Activated CD4-positive, alpha-beta memory T cell treated with anti-CD3 and anti-CD28 coated beads, Interleukin-2, amount 10 ng/mL, durations not matched to agents 7 days and 5 days (primary cell): ENCODE measurements at regions of chr5 and their contacts with region 1.

Region 1: DNA sequence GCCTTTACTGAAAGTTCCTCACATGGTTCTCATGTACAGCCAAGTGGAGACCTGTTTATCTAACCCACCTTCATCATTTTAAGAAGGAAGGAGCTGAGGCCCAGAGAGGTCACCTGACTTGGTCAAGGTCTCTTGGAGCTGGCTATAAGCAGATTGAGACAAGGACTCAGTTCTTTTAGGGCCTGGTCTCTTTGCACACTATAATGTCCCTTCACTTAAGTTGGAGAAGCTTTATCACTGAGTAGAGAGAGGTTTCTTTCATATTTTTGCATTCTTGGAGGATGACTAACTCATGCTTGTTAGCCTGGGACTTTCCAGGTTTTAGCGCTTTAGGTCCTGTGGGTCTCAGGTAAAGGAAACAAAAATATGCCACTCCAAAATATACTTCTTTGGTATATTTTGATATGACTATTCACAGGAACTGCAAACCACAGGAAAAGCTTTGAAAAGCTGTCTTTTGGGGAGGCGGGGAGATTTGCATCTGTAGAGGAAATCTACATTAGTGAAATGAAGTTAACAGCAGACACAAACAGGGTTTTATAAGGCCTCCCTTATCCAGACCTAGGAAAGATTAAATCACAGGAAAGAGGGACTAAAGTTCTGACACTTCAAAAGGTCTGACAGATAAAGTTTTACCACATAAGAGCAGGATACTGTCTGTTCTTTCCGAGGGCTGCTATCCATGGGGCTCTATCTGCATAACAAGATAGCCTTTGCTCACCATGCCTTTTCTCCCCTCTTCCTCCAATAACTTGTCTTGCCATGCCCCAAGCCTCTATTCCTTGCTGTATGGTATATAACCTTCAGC is 95.8 kb upstream of the ANKRD55 start:
- DNase-seq: peak; percentile 52
- H3K4me3 Mint-ChIP-seq: peak overlapping the region; percentile 29
- H3K27ac Mint-ChIP-seq: peak overlapping the region; percentile 82
- H3K4me1 Mint-ChIP-seq: peaks cover 61% of the 10 kb centered on the region
- H3K27me3 Mint-ChIP-seq: no peaks in the 10 kb centered on the region

Region 2: DNA sequence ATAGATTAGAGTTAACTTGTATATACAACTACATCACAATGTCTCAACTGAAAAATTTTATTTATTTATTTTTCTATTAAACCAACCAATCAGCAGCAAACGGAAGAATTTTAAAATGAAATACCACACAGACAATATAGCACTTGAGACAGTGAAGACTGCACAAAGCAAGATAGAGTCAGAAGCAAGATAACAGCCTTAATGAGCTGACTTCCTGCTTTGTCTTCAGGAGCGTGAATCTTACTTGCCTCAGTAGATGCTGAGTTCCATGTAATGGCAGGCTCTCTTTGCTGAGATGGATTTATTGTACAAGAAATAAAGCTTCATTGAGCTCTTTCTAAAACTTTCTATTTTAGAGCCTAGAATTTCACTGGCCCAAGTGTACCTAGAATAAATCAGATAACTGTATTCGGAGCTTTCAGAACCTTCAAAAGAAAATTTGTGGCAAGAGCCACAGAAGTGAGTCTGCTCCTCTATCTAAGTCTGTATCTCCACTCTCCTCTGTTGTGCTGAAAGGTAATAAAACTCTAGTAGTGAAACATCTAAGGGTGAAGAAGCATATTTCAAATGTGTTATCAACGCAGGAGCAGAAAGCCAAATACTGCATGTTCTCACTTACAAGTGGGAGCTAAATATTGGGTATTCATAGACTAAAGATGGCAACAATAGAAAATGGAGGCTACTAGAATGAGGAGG is 12.5 kb before region 1 on chr5:
- CTCF ChIA-PET with region 1: no interaction called
- POLR2A ChIA-PET with region 1: interaction called, 13 read pairs
- DNase-seq: no peak
- H3K4me3 Mint-ChIP-seq: no peak overlapping the region
- H3K27ac Mint-ChIP-seq: no peak overlapping the region
- H3K4me1 Mint-ChIP-seq: peaks cover 25% of the 10 kb centered on the region
- H3K27me3 Mint-ChIP-seq: no peaks in the 10 kb centered on the region